ENCODE measurements at regions of chr12 and their contacts with region 1.

Region 1: GRCh38 chr12:46661110-46661845 is 164.5 kb downstream of the SLC38A4 start:
- DNase-seq: peak; percentile 48
- ATAC-seq: peak; percentile 94
- H3K4me3 ChIP-seq: no peak overlapping the region
- H3K27ac ChIP-seq: no peak overlapping the region
- H3K4me1 ChIP-seq: peaks cover 7% of the 10 kb centered on the region
- H3K27me3 ChIP-seq: no peaks in the 10 kb centered on the region
- CTCF ChIP-seq: peak; percentile 77 to 85 (median 83)
- EP300 ChIP-seq: no peak
- POLR2A ChIP-seq: no peak
- RAD21 ChIP-seq: peak; percentile 93

Region 2: DNA sequence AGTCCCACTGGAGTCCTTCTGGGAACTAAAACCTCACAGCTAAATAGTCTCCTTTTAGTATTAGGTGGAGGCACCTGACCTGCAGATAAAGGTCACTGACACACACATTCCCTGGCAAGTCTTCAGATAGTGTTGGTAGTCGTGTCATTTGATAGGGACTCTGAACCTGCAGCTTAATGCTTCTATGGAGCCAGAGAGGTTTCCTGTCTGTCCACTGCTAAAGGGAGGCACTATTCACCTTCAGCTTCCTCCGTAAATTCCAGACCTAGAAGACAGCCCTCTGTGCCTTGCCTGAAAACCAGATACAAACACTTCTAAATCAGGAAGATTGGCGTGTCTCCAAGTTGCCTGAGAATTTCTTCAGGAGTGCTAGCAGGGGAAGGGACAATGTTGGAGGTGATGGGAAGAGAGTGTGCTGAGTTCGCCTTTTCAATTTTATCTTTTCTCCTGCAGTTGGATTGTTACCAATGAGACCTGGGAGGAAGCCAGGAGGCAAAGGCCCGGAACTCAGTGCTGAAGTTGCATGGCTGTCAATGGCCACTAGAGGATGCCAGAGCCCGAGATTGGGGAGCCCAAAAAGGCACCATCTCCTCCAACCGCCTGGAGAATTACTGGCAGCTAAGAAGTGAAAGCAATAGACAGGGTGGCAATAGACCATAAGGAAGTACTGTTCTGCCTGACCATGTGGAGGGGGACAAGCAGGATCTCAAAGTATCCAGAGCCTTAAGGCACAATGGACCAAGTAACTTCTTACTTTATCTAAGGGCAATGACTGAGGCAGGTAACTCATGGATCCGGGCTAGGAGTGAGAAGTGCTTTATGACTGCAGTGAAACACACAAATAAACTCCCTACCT is 589.3 kb before region 1 on chr12:
- CTCF ChIA-PET with region 1: interaction called, 5 read pairs
- POLR2A ChIA-PET with region 1: no interaction called
- RAD21 ChIA-PET with region 1: no interaction called
- SMC1A ChIA-PET with region 1: interaction called, 3 read pairs
- in situ Hi-C with region 1: no loop called
- intact Hi-C with region 1: loop called (anchors 5 kb)
- DNase-seq: peak; percentile 57
- ATAC-seq: peak; percentile 99
- H3K4me3 ChIP-seq: no peak overlapping the region
- H3K27ac ChIP-seq: peak overlapping the region; percentile 39; the same call in 1 of the 2 replicates
- H3K4me1 ChIP-seq: peaks cover 11% of the 10 kb centered on the region
- H3K27me3 ChIP-seq: no peaks in the 10 kb centered on the region
- CTCF ChIP-seq: peak; percentile 97 to 100 (median 99)
- EP300 ChIP-seq: no peak
- POLR2A ChIP-seq: no peak
- RAD21 ChIP-seq: peak; percentile 97

Region 3: GRCh38 chr12:46342562-46343033 is 318.7 kb before region 1 on chr12:
- CTCF ChIA-PET with region 1: interaction called, 5 read pairs
- POLR2A ChIA-PET with region 1: no interaction called
- RAD21 ChIA-PET with region 1: interaction called, 12 read pairs
- SMC1A ChIA-PET with region 1: interaction called, 5 read pairs
- in situ Hi-C with region 1: no loop called
- intact Hi-C with region 1: loop called (anchors 5 kb)
- DNase-seq: no peak
- ATAC-seq: peak; percentile 98
- H3K4me3 ChIP-seq: no peak overlapping the region
- H3K27ac ChIP-seq: no peak overlapping the region
- H3K4me1 ChIP-seq: no peaks in the 10 kb centered on the region
- H3K27me3 ChIP-seq: no peaks in the 10 kb centered on the region
- CTCF ChIP-seq: peak; percentile 43 to 59 (median 45); a peak in 5 of 6 replicates
- EP300 ChIP-seq: no peak
- POLR2A ChIP-seq: no peak
- RAD21 ChIP-seq: peak; percentile 68

Region 4: GRCh38 chr12:46372544-46373110 is 288.7 kb before region 1 on chr12 and contains the start of gene SLC38A2:
- CTCF ChIA-PET with region 1: interaction called, 4 read pairs
- POLR2A ChIA-PET with region 1: no interaction called
- RAD21 ChIA-PET with region 1: interaction called, 7 read pairs
- SMC1A ChIA-PET with region 1: interaction called, 6 read pairs
- in situ Hi-C with region 1: no loop called
- intact Hi-C with region 1: loop called (anchors 5 kb)
- DNase-seq: no peak
- ATAC-seq: peak; percentile 90
- H3K4me3 ChIP-seq: peak within 1 kb of the TSS; percentile 84
- H3K27ac ChIP-seq: peak within 1 kb of the TSS; percentile 85
- H3K4me1 ChIP-seq: peaks cover 10% of the 10 kb centered on the region
- H3K27me3 ChIP-seq: no peaks in the 10 kb centered on the region
- CTCF ChIP-seq: no peak
- EP300 ChIP-seq: no peak
- POLR2A ChIP-seq: peak; percentile 99
- RAD21 ChIP-seq: no peak
- polyA plus RNA-seq, gene SLC38A2: 36.2 to 47.3 TPM

Region 5: DNA sequence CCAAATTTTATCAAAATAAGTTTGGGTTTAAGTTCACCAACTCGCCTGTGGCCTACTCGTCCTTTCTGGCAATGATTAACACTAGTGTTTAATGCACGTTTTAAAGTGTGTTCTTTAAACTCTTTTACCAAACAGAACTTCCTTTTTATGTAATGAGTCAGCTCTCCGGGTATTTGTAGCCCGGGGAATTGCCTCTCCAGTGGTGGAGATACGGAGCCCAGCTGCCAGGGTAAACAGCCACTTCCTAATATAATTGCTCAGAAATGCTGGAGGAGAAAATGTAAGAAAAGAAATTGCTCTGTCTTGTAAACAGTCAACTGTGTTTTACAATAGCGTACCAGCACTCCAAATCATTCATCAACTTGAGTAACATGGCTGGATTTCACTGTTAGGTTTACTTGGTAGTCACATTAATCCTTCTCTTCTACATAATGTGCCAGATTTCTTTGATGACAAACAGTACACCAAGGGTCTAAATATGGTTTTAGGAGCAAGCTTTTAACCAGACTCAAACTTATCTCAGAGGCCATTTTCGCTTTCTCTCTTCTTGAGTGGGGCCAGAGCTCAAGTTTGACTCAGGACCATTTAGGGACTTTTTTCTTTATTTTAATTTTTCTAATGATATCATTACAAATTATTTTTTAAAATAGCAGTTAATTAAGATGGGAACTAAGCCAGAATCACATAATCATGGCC is 187.5 kb before region 1 on chr12:
- CTCF ChIA-PET with region 1: interaction called, 4 read pairs
- POLR2A ChIA-PET with region 1: no interaction called
- RAD21 ChIA-PET with region 1: interaction called, 3 read pairs
- SMC1A ChIA-PET with region 1: interaction called, 3 read pairs
- in situ Hi-C with region 1: no loop called
- intact Hi-C with region 1: loop called (anchors 5 kb)
- DNase-seq: peak; percentile 51
- ATAC-seq: peak; percentile 72
- H3K4me3 ChIP-seq: peak overlapping the region; percentile 30; the same call in 1 of the 2 replicates
- H3K27ac ChIP-seq: peak overlapping the region; percentile 63
- H3K4me1 ChIP-seq: peaks cover 7% of the 10 kb centered on the region; the same call in 1 of the 2 replicates
- H3K27me3 ChIP-seq: no peaks in the 10 kb centered on the region
- CTCF ChIP-seq: no peak
- EP300 ChIP-seq: peak in 1 of 2 experiments; percentile 65; a peak in 2 of 4 replicates
- POLR2A ChIP-seq: no peak
- RAD21 ChIP-seq: no peak

Region 6: GRCh38 chr12:46675736-46676135 is 14.5 kb after region 1 on chr12:
- CTCF ChIA-PET with region 1: interaction called, 10 read pairs
- POLR2A ChIA-PET with region 1: no interaction called
- RAD21 ChIA-PET with region 1: interaction called, 6 read pairs
- SMC1A ChIA-PET with region 1: interaction called, 5 read pairs
- in situ Hi-C with region 1: no loop called
- intact Hi-C with region 1: no loop called
- DNase-seq: no peak
- ATAC-seq: 0 out of 3 replicates have a peak, but pooled peaks have one; percentile 29
- H3K4me3 ChIP-seq: no peak overlapping the region
- H3K27ac ChIP-seq: no peak overlapping the region
- H3K4me1 ChIP-seq: no peaks in the 10 kb centered on the region
- H3K27me3 ChIP-seq: no peaks in the 10 kb centered on the region
- CTCF ChIP-seq: peak; percentile 35 to 39 (median 35); a peak in 4 of 6 replicates
- EP300 ChIP-seq: no peak
- POLR2A ChIP-seq: no peak
- RAD21 ChIP-seq: peak; percentile 62

Region 7: GRCh38 chr12:47977046-47977766 is 1315.9 kb after region 1 on chr12:
- CTCF ChIA-PET with region 1: no interaction called
- POLR2A ChIA-PET with region 1: no interaction called
- RAD21 ChIA-PET with region 1: no interaction called
- SMC1A ChIA-PET with region 1: no interaction called
- in situ Hi-C with region 1: no loop called
- intact Hi-C with region 1: no loop called
- DNase-seq: no peak
- ATAC-seq: no peak
- H3K4me3 ChIP-seq: no peak overlapping the region
- H3K27ac ChIP-seq: no peak overlapping the region
- H3K4me1 ChIP-seq: no peaks in the 10 kb centered on the region
- H3K27me3 ChIP-seq: no peaks in the 10 kb centered on the region; a peak in 2 of 4 replicates
- CTCF ChIP-seq: no peak
- EP300 ChIP-seq: no peak
- POLR2A ChIP-seq: no peak
- RAD21 ChIP-seq: no peak